Activated CD8-positive, alpha-beta T cell treated with anti-CD3 and anti-CD28 coated beads, Interleukin-2, amount 10 ng/mL, durations not matched to agents 7 days and 5 days (primary cell): ENCODE measurements at regions of chr2 and their contacts with region 1.

Region 1: GRCh38 chr2:74587664-74588277 is 33.3 kb downstream of the DOK1 start:
- DNase-seq: peak; percentile 77
- ATAC-seq: peak; percentile 81
- H3K4me3 Mint-ChIP-seq: no peak overlapping the region
- H3K27ac Mint-ChIP-seq: no peak overlapping the region
- H3K4me1 Mint-ChIP-seq: peaks cover 25% of the 10 kb centered on the region
- H3K27me3 Mint-ChIP-seq: peaks cover 15% of the 10 kb centered on the region

Region 2: DNA sequence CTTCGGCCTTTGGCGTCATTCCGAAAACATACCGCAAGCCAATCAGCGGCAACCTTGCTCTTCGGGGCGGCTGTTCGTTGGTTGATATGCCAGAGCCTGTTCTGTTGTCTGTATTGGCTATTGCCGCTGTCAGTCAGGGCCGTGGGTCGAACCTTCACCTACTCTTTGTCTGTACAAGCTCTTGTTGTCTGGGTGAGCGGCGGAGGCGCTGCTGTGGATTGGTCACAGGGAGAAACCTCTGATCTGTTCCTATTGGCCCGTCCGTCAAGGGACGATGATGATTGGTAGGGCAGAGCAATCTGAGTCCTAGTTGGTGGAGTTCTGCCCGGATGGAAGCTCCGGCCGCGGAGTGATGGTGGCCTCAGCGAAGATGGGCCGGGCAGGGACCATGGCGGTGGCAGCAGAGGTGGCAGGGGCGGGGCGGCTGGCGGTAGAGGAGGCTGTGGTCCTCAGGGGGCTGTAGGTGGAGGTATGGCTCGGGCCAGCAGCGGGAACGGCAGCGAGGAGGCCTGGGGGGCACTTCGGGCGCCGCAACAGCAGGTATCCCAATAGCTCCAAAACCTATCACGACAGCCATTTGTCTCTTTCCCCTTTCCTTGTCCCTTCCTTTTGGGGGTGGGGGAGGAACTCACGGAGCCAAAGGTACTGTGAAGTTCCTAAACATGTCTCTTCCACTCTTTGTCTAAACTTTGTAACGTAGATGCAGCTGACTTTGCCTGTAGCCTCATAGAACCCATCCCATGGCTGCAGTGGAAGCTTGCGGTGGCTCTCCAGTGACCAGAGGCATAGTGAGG is 129.4 kb before region 1 on chr2 and contains the start of gene WBP1:
- CTCF ChIA-PET with region 1: interaction called, 19 read pairs
- POLR2A ChIA-PET with region 1: interaction called, 3 read pairs
- DNase-seq: peak; percentile 100
- ATAC-seq: peak; percentile 91
- H3K4me3 Mint-ChIP-seq: peak within 1 kb of the TSS; percentile 99
- H3K27ac Mint-ChIP-seq: peak within 1 kb of the TSS; percentile 98
- H3K4me1 Mint-ChIP-seq: peaks cover 59% of the 10 kb centered on the region
- H3K27me3 Mint-ChIP-seq: no peaks in the 10 kb centered on the region
- total RNA-seq, gene WBP1: 34.0 to 34.3 TPM

Region 3: DNA sequence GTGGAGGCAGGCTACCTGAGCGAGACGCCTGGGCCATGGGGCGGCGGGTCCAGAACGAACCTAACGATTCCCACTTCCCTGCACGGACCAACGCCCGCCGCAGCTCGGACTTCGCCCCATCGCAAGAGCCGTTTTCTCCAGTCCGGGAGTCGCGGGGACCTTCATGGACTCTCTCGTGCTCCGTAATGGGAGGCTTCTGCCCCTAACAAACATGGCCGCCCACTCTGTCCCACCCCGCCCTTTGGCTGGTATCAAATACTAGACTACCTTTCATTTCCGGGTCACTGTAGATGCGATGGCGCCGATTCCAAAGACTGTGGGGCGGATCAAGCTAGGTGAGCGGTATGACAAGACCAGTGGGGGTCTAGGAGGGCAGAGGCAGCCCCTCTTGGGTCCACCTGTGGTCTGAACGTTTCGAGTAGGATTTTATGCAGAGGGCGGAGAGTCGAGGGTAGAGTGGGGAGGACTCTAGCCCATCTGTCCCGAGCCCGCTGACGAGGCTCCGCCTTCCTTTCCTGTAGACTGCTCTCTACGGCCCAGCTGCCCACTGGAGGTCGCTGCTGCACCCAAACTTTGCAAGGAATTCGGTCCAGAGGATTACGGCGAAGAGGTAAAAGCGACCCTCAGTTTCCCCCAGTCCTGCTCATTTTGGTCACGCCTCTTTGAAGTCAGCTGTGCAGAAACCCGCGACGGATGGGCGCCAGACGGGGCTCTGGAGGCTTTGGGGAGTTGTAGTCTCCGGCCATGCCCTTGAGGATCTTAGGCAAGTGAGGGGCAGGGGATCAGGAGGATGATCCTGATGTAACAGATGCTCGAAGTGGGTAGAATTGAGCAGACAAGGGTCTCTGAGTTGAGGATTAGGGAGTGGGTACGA is 104.7 kb before region 1 on chr2 and contains the starts of genes CCDC142 and TTC31:
- CTCF ChIA-PET with region 1: interaction called, 101 read pairs
- POLR2A ChIA-PET with region 1: interaction called, 4 read pairs
- DNase-seq: peak; percentile 97
- ATAC-seq: peak; percentile 95
- H3K4me3 Mint-ChIP-seq: peak within 1 kb of the TSS; percentile 100
- H3K27ac Mint-ChIP-seq: peak within 1 kb of the TSS; percentile 100
- H3K4me1 Mint-ChIP-seq: peaks cover 41% of the 10 kb centered on the region
- H3K27me3 Mint-ChIP-seq: no peaks in the 10 kb centered on the region
- total RNA-seq, gene CCDC142: 22.5 to 26.7 TPM
- total RNA-seq, gene TTC31: 38.3 to 40.0 TPM

Region 4: GRCh38 chr2:74507145-74507925 is 80.4 kb before region 1 on chr2 and contains the start of gene PCGF1:
- CTCF ChIA-PET with region 1: interaction called, 43 read pairs
- POLR2A ChIA-PET with region 1: interaction called, 3 read pairs
- DNase-seq: peak; percentile 99
- ATAC-seq: peak; percentile 90
- H3K4me3 Mint-ChIP-seq: peak within 1 kb of the TSS; percentile 100
- H3K27ac Mint-ChIP-seq: peak within 1 kb of the TSS; percentile 100
- H3K4me1 Mint-ChIP-seq: peaks cover 55% of the 10 kb centered on the region
- H3K27me3 Mint-ChIP-seq: peaks cover 35% of the 10 kb centered on the region
- total RNA-seq, gene PCGF1: 20.3 to 28.5 TPM

Region 5: DNA sequence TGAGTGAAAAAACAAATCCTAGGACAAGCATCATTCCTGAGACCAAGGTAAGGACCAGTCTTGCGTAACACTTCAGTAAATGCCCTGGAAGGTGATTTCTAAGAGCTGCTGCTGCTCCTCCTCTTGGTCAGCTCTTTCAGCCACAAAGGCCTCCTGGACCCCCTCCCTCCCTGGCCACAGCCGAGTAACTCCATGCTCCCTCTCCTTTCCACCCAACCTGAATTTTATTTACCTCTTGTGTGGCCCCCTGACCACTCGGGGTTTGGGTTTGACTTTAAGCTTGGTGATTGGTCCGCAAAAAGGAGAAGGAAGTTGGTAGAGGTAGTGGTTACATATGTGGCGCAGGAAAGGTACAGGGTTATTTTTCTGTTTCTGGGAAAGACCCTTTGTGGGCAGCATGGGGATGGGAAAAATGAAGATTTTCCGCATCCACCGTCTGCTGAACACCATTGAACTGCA is 48.9 kb before region 1 on chr2:
- CTCF ChIA-PET with region 1: interaction called, 74 read pairs
- POLR2A ChIA-PET with region 1: no interaction called
- DNase-seq: no peak
- ATAC-seq: no peak
- H3K4me3 Mint-ChIP-seq: no peak overlapping the region
- H3K27ac Mint-ChIP-seq: no peak overlapping the region
- H3K4me1 Mint-ChIP-seq: peaks cover 22% of the 10 kb centered on the region
- H3K27me3 Mint-ChIP-seq: peaks cover 36% of the 10 kb centered on the region

Region 6: DNA sequence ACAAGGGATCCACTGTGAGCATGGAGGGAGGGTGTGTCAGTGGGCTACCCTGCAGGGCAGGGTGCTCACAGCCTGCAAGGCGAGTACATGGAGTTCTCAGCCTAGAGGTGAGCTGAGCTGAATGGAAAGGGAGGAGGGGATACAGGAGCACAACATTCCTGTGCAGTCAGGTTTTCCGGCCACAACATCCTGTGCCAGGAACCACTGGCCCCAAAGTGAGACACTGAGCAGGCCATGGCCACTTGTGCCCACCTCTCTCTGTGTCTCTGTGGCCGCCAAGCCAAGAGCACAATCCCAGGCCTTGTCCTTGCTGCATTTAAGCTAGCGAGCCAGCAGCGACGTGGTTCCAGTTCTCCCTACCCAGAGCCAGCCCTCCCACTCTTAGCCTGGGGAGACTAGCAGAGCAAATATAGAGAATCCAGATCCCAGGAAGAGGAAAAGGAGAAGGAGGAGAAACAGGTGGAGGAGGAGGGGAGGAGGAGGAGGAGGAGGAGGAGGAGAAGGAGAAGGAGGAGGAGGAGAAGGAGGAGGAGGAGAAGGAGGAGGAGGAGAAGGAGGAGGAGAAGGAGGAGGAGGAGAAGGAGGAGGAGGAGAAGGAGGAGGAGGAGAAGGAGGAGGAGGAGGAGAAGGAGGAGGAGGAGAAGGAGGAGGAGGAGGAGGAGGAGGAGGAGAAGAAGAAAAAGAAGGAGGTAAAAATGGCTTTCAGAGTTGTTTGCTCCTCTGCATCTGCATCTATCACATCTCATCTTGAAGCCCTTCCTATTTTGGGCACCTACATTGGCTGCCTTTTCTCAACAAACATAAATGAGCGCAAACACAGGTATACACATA is 27.0 kb before region 1 on chr2:
- CTCF ChIA-PET with region 1: interaction called, 231 read pairs
- POLR2A ChIA-PET with region 1: interaction called, 3 read pairs
- DNase-seq: no peak
- ATAC-seq: no peak
- H3K4me3 Mint-ChIP-seq: no peak overlapping the region
- H3K27ac Mint-ChIP-seq: no peak overlapping the region
- H3K4me1 Mint-ChIP-seq: peaks cover 39% of the 10 kb centered on the region
- H3K27me3 Mint-ChIP-seq: peaks cover 12% of the 10 kb centered on the region

Region 7: GRCh38 chr2:74602586-74603281 is 15.0 kb after region 1 on chr2:
- CTCF ChIA-PET with region 1: interaction called, 83 read pairs
- POLR2A ChIA-PET with region 1: interaction called, 3 read pairs
- DNase-seq: no peak
- ATAC-seq: no peak
- H3K4me3 Mint-ChIP-seq: no peak overlapping the region
- H3K27ac Mint-ChIP-seq: no peak overlapping the region
- H3K4me1 Mint-ChIP-seq: peaks cover 21% of the 10 kb centered on the region
- H3K27me3 Mint-ChIP-seq: peaks cover 31% of the 10 kb centered on the region